ENCODE measurements at regions of chr4 and their contacts with region 1.

Region 1: DNA sequence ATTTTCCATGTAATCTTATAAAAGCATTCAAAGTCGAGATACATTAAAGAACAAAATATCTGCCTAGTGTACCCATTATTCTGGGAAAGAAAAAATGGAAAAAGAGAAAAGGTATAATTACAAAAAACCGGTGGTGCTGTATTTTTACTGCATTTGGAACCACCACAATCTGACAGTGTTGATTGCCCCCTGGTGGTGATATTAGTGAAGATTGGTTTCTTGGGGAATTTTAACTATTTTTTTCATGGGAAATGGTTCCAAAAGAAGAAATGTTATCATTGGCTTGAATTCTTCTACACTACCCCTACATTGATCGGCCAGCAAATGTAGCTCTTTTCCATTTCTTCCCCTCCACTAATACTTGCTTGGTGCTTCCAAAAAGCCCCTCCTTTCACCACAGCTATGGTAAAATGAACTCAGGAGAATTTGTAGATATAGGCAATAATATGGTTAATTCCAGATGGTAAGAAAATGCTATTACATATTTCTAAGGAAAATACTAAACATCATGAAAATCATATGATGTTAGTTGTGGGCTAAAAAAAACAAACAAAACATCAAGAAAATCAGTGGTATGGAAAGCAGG is 50.0 kb downstream of the COX18 start:
- DNase-seq: peak in 1 of 2 donors; percentile 55
- ATAC-seq: peak in 1 of 3 donors; percentile 29
- H3K4me3 ChIP-seq: no peak overlapping the region
- H3K4me3 Mint-ChIP-seq: no peak overlapping the region
- H3K27ac ChIP-seq: no peak overlapping the region
- H3K27ac Mint-ChIP-seq: no peak overlapping the region
- H3K4me1 ChIP-seq: no peaks in the 10 kb centered on the region
- H3K4me1 Mint-ChIP-seq: no peaks in the 10 kb centered on the region
- H3K27me3 ChIP-seq: no peaks in the 10 kb centered on the region
- H3K27me3 Mint-ChIP-seq: peaks cover 6 to 25% of the 10 kb centered on the region in 2 donors
- CTCF ChIP-seq: peak; percentile 72

Region 2: GRCh38 chr4:71270901-71271300 is 1748.7 kb before region 1 on chr4:
- intact Hi-C with region 1: loop called (anchors 5 kb)
- DNase-seq: peak; percentile 31 to 60
- ATAC-seq: peak; percentile 62 to 82 (median 77)
- H3K4me3 ChIP-seq: no peak overlapping the region
- H3K4me3 Mint-ChIP-seq: no peak overlapping the region
- H3K27ac ChIP-seq: no peak overlapping the region
- H3K27ac Mint-ChIP-seq: no peak overlapping the region
- H3K4me1 ChIP-seq: peaks cover 16% of the 10 kb centered on the region
- H3K4me1 Mint-ChIP-seq: peaks cover 45 to 55% of the 10 kb centered on the region in 2 donors
- H3K27me3 ChIP-seq: no peaks in the 10 kb centered on the region
- H3K27me3 Mint-ChIP-seq: no peaks in the 10 kb centered on the region
- CTCF ChIP-seq: peak; percentile 53

Region 3: GRCh38 chr4:72974694-72975487 is 44.7 kb before region 1 on chr4:
- intact Hi-C with region 1: no loop called
- DNase-seq: no peak
- ATAC-seq: no peak
- H3K4me3 ChIP-seq: no peak overlapping the region
- H3K4me3 Mint-ChIP-seq: no peak overlapping the region
- H3K27ac ChIP-seq: no peak overlapping the region
- H3K27ac Mint-ChIP-seq: no peak overlapping the region
- H3K4me1 ChIP-seq: no peaks in the 10 kb centered on the region
- H3K4me1 Mint-ChIP-seq: no peaks in the 10 kb centered on the region
- H3K27me3 ChIP-seq: no peaks in the 10 kb centered on the region
- H3K27me3 Mint-ChIP-seq: peaks cover 0 to 4% of the 10 kb centered on the region in 2 donors
- CTCF ChIP-seq: no peak

Region 4: DNA sequence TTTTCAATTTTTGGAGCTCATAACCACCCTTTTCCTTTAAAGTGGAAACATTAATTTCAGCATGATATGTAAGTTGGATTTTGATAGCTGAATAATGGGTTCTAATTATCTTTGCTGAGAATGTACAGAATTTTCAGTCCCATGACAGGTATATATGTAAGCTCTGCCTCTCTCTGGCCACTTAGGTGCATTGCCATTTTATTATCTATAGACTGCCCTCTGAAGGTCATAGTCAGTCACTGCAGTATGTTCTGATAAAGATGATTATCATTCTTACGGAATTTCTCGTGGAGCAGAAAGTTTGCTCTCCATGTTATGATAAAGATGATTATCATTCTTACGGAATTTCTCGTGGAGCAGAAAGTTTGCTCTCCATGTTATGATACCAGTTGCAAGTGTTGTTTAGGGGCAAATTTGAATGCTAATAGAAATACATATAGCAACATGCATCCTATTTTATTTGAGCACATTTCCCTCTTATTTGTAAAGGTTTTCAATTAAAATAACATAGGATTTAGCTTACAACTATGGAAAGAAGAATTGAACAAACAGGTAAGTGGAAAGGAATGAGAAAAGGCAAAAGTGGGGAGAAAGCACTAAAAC is 426.9 kb after region 1 on chr4:
- intact Hi-C with region 1: no loop called
- DNase-seq: peak in 1 of 2 donors; percentile 40
- ATAC-seq: peak; percentile 49 to 66 (median 59)
- H3K4me3 ChIP-seq: no peak overlapping the region
- H3K4me3 Mint-ChIP-seq: no peak overlapping the region
- H3K27ac ChIP-seq: no peak overlapping the region
- H3K27ac Mint-ChIP-seq: no peak overlapping the region
- H3K4me1 ChIP-seq: no peaks in the 10 kb centered on the region
- H3K4me1 Mint-ChIP-seq: no peaks in the 10 kb centered on the region
- H3K27me3 ChIP-seq: no peaks in the 10 kb centered on the region
- H3K27me3 Mint-ChIP-seq: no peaks in the 10 kb centered on the region
- CTCF ChIP-seq: peak; percentile 31